AG04450 (cell line): ENCODE measurements at regions of chr14 and their contacts with region 1.

Region 1: DNA sequence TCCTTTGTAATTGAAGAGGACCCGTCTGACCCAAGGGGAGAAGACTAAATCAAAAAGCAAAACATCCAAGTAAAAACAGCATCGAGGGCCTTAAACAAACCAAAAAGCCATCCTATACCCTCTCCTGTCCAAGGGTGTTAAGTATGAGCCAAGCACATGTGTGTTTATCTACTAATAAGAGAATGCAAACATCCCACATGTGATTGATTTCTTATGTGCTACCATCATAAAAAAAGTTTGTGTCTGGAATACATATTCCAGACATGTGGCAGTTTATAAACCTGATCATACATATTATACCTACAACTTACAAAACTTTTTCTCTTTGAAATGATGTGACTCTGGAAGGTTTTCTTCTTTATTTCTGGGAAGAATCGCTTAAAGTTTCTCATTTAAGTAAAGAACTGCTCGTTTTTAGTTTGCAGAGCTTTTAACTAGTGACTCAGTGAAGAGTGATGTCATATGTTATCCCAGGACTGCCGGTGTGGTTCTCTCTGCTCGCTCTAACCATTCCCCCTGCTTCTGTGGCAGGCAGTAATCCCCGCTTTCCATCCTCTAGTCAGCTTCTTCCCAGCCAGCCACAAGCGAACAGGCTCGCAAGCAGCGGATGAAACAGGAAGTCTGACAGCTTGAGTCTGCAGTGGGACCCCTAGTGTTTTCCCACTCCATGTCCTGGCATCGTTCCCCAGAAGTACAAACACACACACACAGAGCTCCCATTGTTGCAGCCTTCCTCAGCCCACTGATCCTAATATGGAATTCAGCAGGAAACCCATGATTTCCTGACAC is 431 bp upstream of the RHOJ start:
- DNase-seq: peak; percentile 98
- H3K4me3 ChIP-seq: peak overlapping the region; percentile 77
- H3K27ac ChIP-seq: peak overlapping the region; percentile 97
- H3K27me3 ChIP-seq: no peaks in the 10 kb centered on the region
- CTCF ChIP-seq: peak; percentile 49

Region 2: GRCh38 chr14:63174760-63175211 is 29.0 kb before region 1 on chr14:
- CTCF ChIA-PET with region 1: interaction called, 11 read pairs
- POLR2A ChIA-PET with region 1: interaction called, 3 read pairs
- DNase-seq: peak; percentile 34
- H3K4me3 ChIP-seq: no peak overlapping the region
- H3K27ac ChIP-seq: no peak overlapping the region
- H3K27me3 ChIP-seq: no peaks in the 10 kb centered on the region
- CTCF ChIP-seq: peak; percentile 79